ENCODE measurements at regions of chr17 and their contacts with region 1.

Region 1: DNA sequence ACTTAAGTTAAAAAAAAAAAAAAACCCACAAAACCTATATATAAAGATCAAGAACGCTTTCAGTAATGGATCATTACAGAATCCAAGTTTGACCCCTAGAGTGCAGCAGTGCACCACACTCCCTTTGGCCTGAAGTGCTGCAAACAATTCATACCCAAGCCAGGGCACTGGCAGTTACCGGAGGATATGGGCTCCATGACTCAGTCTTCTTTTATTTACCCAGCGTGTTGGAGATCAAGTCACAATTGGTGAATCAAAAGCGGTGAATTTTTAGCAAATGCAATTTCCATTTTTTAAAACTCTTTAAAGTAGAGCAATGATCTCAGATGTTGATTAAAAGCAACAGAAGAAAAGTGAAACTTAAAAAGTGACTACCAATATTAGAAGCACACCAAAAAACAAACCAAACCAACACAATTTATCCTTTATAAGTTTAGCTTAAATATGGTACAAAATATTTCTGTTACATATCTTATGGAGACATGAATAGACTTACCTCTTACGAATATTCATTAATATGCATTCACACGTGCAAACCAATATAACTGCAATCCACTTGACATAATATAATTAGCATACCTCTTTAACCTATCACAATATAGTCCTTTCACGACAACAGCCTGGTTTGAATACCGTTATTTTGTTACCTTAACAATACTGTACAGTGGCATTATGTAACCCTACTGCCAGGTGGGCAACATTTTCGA is 46.3 kb downstream of the ZNF652 start:
- DNase-seq: peak; percentile 91
- ATAC-seq: peak; percentile 99
- H3K4me3 ChIP-seq: no peak overlapping the region
- H3K27ac ChIP-seq: no peak overlapping the region
- H3K4me1 ChIP-seq: peaks cover 3% of the 10 kb centered on the region; the same call in 1 of the 2 replicates
- H3K27me3 ChIP-seq: no peaks in the 10 kb centered on the region
- CTCF ChIP-seq: peak; percentile 97
- POLR2A ChIP-seq: peak; percentile 60; the same call in 1 of the 2 replicates
- RAD21 ChIP-seq: peak; percentile 99

Region 2: DNA sequence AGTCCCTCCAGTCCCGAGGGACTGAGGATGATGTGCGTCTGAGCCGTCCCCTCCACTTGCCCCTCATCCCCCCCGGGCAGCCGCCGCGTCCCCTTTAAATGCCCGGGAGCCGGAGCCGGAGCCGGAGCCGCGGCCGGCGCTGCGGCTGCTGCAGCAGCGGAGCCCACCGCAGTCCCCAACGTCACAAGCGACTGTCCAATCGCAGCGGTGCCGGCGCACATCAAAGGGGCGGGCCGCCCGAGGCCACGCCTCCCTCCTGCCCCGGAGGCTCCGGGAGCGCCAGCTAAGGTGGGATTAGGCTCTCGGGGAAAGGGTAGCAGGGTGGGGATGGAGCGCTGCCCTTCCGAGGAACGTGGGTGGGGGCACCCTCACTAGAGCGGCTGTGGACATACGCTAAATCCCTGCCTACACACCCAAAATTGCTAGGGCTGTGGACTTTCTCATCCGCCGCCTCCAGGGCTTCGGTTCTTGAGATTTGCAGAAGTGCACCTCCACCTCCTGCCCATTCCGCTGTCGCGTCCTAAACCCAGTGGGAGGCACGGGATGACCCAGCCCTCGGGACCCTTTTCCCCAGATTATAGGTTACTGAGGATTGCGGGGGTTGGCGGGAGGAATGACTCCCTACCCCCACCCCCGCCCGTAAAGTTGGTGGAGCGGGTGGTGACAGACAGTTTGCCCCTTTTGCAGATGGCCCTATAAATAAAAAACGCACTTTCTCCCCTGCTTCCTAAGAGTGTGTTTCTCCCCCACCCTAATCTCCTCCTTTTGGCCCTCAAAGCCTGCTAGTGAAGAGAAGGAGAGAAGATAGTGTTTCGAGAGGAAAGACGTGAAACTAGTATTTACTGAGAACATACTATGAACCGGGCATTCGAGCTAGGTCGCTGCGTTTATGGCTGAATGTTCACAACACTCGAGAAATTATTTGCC is 84.8 kb before region 1 on chr17 and contains the start of gene PHOSPHO1:
- CTCF ChIA-PET with region 1: no interaction called
- POLR2A ChIA-PET with region 1: no interaction called
- dilution Hi-C with region 1: no loop called
- in situ Hi-C with region 1: no loop called
- intact Hi-C with region 1: no loop called
- DNase-seq: peak; percentile 76
- ATAC-seq: peak; percentile 99
- H3K4me3 ChIP-seq: peak within 1 kb of the TSS; percentile 91
- H3K27ac ChIP-seq: no peak within 1 kb of the TSS; the same call in 1 of the 2 replicates
- H3K4me1 ChIP-seq: no peaks in the 10 kb centered on the region
- H3K27me3 ChIP-seq: peaks cover 23% of the 10 kb centered on the region
- CTCF ChIP-seq: no peak
- POLR2A ChIP-seq: no peak
- RAD21 ChIP-seq: 0 out of 2 replicates have a peak, but pooled peaks have one; percentile 2
- total RNA-seq, gene PHOSPHO1: under 0.01 TPM in 2 replicates

Region 3: DNA sequence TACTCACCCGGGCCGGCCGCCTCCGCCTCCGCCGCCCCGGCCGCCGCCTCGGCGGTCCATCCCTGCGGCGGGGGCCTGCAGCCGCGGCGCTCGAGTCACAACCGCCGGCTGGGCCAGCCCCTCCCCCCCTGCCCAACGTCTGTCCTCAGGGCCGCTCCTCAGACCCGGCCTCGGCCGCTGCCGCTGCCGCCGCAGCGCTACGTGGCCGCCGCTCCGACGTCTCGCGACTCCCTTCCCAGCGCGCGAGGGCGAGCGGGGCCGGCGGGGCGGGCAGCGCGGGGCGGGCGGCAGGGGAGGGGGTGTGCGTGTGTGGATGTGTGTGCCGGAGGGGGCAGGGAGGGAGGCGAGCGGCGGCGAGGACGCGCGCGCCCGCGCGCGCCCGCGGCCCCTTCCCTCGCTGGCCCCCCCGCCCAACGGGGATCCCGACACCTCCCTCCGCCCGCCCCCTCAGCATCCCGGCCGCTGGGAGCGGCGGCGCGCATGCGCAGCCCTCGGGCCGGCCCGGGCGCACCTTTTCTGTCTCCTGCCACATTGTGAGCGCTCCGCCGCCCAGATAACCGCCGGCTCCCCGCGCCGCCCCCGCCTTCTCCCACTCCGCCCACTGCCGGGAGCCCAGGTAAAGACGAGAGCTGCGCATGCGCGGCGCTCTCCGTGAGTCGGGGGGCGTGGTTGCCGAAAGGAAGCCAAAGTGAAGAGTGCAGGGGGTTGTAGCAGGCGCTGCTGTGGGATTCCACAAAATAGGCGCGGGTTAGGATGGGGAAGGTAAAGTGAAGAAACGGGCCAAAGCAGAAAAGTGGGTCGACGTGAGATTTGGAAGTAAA is 46.4 kb after region 1 on chr17 and contains the start of gene ZNF652:
- CTCF ChIA-PET with region 1: interaction called, 3 read pairs
- POLR2A ChIA-PET with region 1: no interaction called
- dilution Hi-C with region 1: no loop called
- in situ Hi-C with region 1: no loop called
- intact Hi-C with region 1: loop called (anchors 2 kb)
- DNase-seq: peak; percentile 75
- ATAC-seq: peak; percentile 88
- H3K4me3 ChIP-seq: peak within 1 kb of the TSS; percentile 80
- H3K27ac ChIP-seq: peak within 1 kb of the TSS; percentile 57
- H3K4me1 ChIP-seq: peaks cover 6% of the 10 kb centered on the region; the same call in 1 of the 2 replicates
- H3K27me3 ChIP-seq: no peaks in the 10 kb centered on the region
- CTCF ChIP-seq: no peak
- POLR2A ChIP-seq: no peak
- RAD21 ChIP-seq: no peak
- total RNA-seq, gene ZNF652: 8.8 and 9.7 TPM in 2 replicates

Region 4: DNA sequence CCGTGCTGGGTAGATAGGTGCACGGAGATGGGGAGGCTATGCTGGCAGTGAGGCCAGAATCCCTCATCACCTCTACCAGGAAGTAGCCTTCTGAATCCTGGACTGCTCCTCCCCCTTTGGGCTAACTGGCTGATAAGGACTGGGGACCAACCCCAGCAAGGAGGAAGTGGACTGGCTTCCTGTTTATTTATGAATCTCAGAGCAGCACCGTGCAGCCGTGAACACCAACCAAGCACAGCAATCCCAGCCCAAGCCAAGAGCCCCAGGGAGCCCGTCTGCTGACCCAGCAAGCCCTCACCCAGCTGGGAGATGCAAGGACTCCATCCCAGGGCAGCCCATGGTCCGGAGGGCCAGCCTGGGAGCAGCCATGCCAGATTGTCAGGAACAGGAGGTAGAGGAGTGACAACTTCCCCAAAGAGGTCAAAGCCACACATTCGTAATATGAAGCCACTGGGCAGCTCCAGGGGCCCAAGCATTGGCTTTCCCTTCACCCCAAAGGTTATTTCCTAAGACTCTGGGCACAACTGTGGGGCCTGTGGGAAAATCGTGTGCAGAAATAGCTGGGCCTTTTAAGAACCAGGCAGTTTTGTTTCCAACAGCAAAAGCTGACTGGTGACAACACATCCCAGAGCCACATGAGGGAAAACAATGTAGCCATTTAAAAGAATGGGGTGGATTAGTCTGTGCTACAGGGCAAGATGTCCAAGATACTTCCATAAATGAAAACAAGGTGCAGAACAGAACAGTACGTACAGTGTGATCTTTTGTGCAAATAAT is 75.0 kb after region 1 on chr17:
- CTCF ChIA-PET with region 1: no interaction called
- POLR2A ChIA-PET with region 1: no interaction called
- dilution Hi-C with region 1: no loop called
- in situ Hi-C with region 1: loop called (anchors 5 kb)
- intact Hi-C with region 1: loop called (anchors 1 kb)
- DNase-seq: no peak
- ATAC-seq: 0 out of 2 replicates have a peak, but pooled peaks have one; percentile 18
- H3K4me3 ChIP-seq: no peak overlapping the region
- H3K27ac ChIP-seq: no peak overlapping the region
- H3K4me1 ChIP-seq: peaks cover 8% of the 10 kb centered on the region
- H3K27me3 ChIP-seq: no peaks in the 10 kb centered on the region
- CTCF ChIP-seq: no peak
- POLR2A ChIP-seq: no peak
- RAD21 ChIP-seq: no peak

Region 5: GRCh38 chr17:49399995-49400394 is 84.3 kb after region 1 on chr17:
- CTCF ChIA-PET with region 1: interaction called, 3 read pairs
- POLR2A ChIA-PET with region 1: no interaction called
- dilution Hi-C with region 1: no loop called
- in situ Hi-C with region 1: loop called (anchors 5 kb)
- intact Hi-C with region 1: loop called (anchors 1 kb)
- DNase-seq: no peak
- ATAC-seq: no peak
- H3K4me3 ChIP-seq: no peak overlapping the region
- H3K27ac ChIP-seq: no peak overlapping the region
- H3K4me1 ChIP-seq: no peaks in the 10 kb centered on the region
- H3K27me3 ChIP-seq: peaks cover 12% of the 10 kb centered on the region
- CTCF ChIP-seq: no peak
- POLR2A ChIP-seq: no peak
- RAD21 ChIP-seq: no peak

Region 6: GRCh38 chr17:49548506-49549310 is 233.0 kb after region 1 on chr17:
- CTCF ChIA-PET with region 1: no interaction called
- POLR2A ChIA-PET with region 1: no interaction called
- dilution Hi-C with region 1: no loop called
- in situ Hi-C with region 1: loop called (anchors 10 kb)
- intact Hi-C with region 1: no loop called
- DNase-seq: peak; percentile 30
- ATAC-seq: peak; percentile 79
- H3K4me3 ChIP-seq: no peak overlapping the region
- H3K27ac ChIP-seq: no peak overlapping the region
- H3K4me1 ChIP-seq: no peaks in the 10 kb centered on the region
- H3K27me3 ChIP-seq: peaks cover 57% of the 10 kb centered on the region
- CTCF ChIP-seq: peak; percentile 63
- POLR2A ChIP-seq: no peak
- RAD21 ChIP-seq: peak; percentile 78